Colonic mucosa (tissue), 4 donors: ENCODE measurements at regions of chr7 and their contacts with region 1.

Region 1: DNA sequence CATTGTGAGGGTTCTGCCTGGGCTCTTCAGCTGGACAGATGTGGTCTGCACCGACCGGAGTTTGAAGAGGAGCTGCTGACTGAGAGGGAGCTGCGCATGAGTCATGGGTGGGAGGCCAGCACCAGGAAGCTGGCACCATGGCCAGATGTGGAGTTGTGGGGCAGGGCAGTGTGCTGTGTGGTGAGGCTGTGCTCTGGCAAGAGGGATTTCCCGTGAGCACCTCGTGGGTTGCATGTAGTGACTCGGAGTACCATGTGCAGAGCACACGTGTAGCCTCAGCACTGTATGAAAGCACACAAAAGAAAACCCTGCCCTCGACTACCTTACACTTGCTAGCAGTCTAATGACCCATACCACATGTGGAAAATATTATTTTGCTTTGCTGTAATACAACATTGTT is 103.4 kb downstream of the WNT2 start:
- DNase-seq: no peak
- H3K4me3 ChIP-seq: no peak overlapping the region
- H3K27ac ChIP-seq: no peak overlapping the region
- H3K4me1 ChIP-seq: no peaks in the 10 kb centered on the region
- H3K27me3 ChIP-seq: no peaks in the 10 kb centered on the region
- CTCF ChIP-seq: no peak

Region 2: DNA sequence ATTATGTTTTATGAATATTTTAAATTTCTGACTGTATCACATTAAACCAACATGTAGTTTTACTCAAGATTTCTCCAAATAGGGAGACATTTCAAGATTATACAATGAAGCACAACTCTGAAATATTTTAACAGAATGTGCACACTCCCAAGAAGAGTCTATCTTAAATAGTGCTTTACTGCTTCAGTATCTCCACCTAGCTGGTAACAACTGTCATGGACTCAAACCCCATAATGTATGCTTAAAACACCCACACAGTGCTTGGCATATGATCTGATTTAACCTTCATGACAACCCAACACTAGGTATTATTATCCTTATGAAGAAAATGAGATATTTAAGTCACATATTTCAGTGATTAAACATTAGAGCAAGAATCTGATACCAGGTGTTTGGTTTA is 161.9 kb after region 1 on chr7:
- intact Hi-C with region 1: loop called (anchors 5 kb)
- DNase-seq: no peak
- H3K4me3 ChIP-seq: no peak overlapping the region
- H3K27ac ChIP-seq: no peak overlapping the region
- H3K4me1 ChIP-seq: no peaks in the 10 kb centered on the region
- H3K27me3 ChIP-seq: no peaks in the 10 kb centered on the region
- CTCF ChIP-seq: no peak